ENCODE measurements at regions of chr16 and their contacts with region 1.

Region 1: DNA sequence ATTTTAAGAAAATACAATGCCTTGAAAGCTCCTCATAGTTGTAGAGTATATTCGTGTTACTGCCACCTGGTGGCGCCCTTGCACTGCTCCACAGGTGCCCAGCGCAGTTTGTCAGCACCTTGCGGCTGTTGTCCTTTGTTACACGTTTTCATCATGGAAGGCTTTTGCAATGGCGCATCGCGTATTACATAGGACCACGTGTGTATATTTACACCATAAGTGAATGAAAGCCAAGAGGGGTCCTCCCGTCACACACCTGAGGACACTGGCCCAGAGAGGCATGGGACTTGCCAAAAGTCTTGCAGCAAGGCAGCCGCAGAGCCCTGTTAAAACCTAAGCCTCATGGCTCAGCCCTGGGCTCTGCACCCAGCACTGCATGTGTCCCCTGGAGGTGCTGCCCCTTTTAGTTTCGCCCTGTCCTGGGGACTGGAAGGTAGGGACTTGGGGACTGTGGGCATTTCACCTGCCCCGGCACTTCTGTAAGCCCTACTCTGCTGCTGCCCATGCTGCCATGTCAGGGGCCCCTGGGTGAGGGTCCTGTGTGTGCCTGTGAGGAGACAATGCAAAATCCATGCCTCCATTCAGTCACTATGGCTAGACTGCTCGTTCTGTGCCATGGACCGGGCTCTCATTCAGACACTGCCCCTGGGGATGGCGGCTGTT is 24.3 kb downstream of the POLR3E start:
- DNase-seq: peak; percentile 82
- ATAC-seq: peak; percentile 75
- H3K4me3 Mint-ChIP-seq: no peak overlapping the region
- H3K27ac Mint-ChIP-seq: peak overlapping the region; percentile 20
- H3K4me1 Mint-ChIP-seq: no peaks in the 10 kb centered on the region
- H3K27me3 Mint-ChIP-seq: no peaks in the 10 kb centered on the region

Region 2: GRCh38 chr16:22272870-22273595 is 48.4 kb before region 1 on chr16:
- CTCF ChIA-PET with region 1: no interaction called
- POLR2A ChIA-PET with region 1: no interaction called
- DNase-seq: no peak
- ATAC-seq: no peak
- H3K4me3 Mint-ChIP-seq: no peak overlapping the region
- H3K27ac Mint-ChIP-seq: no peak overlapping the region
- H3K4me1 Mint-ChIP-seq: peaks cover 4% of the 10 kb centered on the region
- H3K27me3 Mint-ChIP-seq: no peaks in the 10 kb centered on the region

Region 3: GRCh38 chr16:22297114-22297878 is 24.2 kb before region 1 on chr16 and contains the start of gene POLR3E:
- CTCF ChIA-PET with region 1: interaction called, 10 read pairs
- POLR2A ChIA-PET with region 1: interaction called, 4 read pairs
- DNase-seq: peak; percentile 100
- ATAC-seq: peak; percentile 87
- H3K4me3 Mint-ChIP-seq: peak within 1 kb of the TSS; percentile 92
- H3K27ac Mint-ChIP-seq: peak within 1 kb of the TSS; percentile 93
- H3K4me1 Mint-ChIP-seq: peaks cover 27% of the 10 kb centered on the region
- H3K27me3 Mint-ChIP-seq: peaks cover 2% of the 10 kb centered on the region
- total RNA-seq, gene POLR3E: 43.8 to 49.9 TPM